ENCODE measurements at regions of chr16 and their contacts with region 1.

Region 1: DNA sequence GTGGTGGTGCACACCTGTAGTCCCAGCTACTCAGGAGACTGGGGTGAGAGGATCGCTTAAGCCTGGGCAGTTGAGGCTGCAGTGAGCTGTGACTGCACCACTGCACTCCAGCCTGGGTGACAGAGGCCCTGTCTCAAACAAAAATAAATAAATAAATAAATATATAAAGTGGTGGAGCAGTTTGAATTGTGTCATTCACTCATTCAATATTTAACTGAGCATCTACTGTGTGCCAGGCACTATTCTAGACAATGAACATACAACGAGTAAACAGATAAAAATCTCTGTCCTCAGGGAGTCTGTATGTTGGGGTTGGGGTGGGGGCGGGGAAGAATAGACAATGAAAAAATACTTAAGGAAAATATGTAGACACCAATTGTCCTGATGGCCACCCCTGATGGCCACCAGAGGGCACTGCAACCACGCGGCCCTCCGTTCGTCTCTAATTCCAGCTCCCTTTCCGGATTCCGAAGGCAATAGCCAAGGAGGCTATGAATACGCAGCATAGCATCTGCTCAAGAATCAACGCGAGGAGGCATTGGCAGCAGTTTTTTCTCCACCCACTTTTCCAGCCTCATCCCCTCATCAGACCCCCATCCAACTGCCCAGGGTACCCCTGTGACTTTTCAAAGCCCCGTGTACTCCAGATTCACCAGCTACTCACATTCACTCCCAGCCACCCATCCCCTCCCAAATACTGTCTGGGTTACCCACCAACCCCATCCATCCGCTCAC is 21.4 kb downstream of the QPRT start:
- DNase-seq: peak; percentile 67 to 94
- H3K4me3 ChIP-seq: no peak overlapping the region
- CTCF ChIP-seq: no peak
- POLR2A ChIP-seq: no peak

Region 2: DNA sequence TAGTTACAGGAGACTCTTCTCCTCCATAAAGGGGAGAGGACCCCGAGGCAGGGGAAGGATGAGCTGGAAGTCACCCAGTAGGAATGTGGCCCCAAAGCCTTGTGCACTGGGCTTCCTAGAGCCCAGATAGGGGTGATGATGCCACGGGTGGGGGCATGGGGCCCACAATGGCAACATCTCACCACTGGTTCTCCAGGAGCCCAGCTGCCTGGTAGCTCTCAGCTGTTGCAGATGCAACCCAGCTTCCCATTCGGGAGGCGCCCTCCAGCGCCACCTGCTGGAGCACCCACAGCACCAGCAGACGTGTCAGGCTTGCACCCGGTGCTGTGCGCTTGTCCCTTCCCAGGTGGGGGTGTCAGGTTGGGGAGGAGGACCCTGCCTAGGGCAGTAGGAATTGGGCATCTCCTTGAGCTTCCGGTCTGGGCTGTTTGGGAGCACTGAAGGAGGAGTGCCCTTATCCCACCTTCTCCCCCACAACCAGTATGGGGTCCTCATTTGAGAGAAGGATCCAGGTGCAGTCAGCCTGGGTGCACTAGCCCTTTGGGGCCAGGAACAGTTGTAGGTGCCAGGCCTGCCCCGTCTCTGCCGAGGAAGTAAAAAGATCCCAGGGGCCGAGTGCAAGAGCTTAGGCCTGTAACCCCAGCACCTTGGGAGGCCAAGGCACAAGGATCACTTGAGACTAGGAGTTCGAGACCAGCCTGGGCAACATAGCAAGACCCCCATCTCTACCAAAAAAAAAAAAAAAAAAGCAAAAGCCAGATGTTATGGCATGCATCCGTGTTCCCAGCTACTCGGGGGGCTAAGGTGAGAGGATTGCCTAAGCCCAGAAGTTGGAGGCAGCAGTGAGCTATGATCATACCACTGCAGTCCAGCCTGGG is 148.2 kb after region 1 on chr16:
- intact Hi-C with region 1: loop called (anchors 10 kb)
- DNase-seq: peak; percentile 36 to 95
- H3K4me3 ChIP-seq: no peak overlapping the region
- CTCF ChIP-seq: peak in 1 of 3 donors; percentile 77
- POLR2A ChIP-seq: no peak

Measured in lower leg skin (tissue), 4 donors.